Activated naive CD4-positive, alpha-beta T cell treated with anti-CD3 and anti-CD28 coated beads for 36 hours (primary cell): ENCODE measurements at regions of chr5 and their contacts with region 1.

Region 1: GRCh38 chr5:179530069-179530998 is 20.0 kb upstream of the RUFY1 start:
- DNase-seq: peak; percentile 78
- H3K4me3 Mint-ChIP-seq: peak overlapping the region; percentile 48
- H3K27ac Mint-ChIP-seq: no peak overlapping the region
- H3K4me1 Mint-ChIP-seq: peaks cover 15% of the 10 kb centered on the region
- H3K27me3 Mint-ChIP-seq: no peaks in the 10 kb centered on the region

Region 2: GRCh38 chr5:179164331-179165311 is 365.7 kb before region 1 on chr5:
- CTCF ChIA-PET with region 1: no interaction called
- intact Hi-C with region 1: no loop called
- DNase-seq: no peak
- H3K4me3 Mint-ChIP-seq: no peak overlapping the region
- H3K27ac Mint-ChIP-seq: no peak overlapping the region
- H3K4me1 Mint-ChIP-seq: peaks cover 3% of the 10 kb centered on the region
- H3K27me3 Mint-ChIP-seq: peaks cover 2% of the 10 kb centered on the region

Region 3: GRCh38 chr5:179455285-179455684 is 75.0 kb before region 1 on chr5:
- CTCF ChIA-PET with region 1: no interaction called
- intact Hi-C with region 1: no loop called
- DNase-seq: no peak
- H3K4me3 Mint-ChIP-seq: no peak overlapping the region
- H3K27ac Mint-ChIP-seq: no peak overlapping the region
- H3K4me1 Mint-ChIP-seq: no peaks in the 10 kb centered on the region
- H3K27me3 Mint-ChIP-seq: peaks cover 4% of the 10 kb centered on the region

Region 4: GRCh38 chr5:179516221-179516620 is 14.1 kb before region 1 on chr5:
- CTCF ChIA-PET with region 1: no interaction called
- intact Hi-C with region 1: no loop called
- DNase-seq: no peak
- H3K4me3 Mint-ChIP-seq: no peak overlapping the region
- H3K27ac Mint-ChIP-seq: no peak overlapping the region
- H3K4me1 Mint-ChIP-seq: no peaks in the 10 kb centered on the region
- H3K27me3 Mint-ChIP-seq: no peaks in the 10 kb centered on the region

Region 5: DNA sequence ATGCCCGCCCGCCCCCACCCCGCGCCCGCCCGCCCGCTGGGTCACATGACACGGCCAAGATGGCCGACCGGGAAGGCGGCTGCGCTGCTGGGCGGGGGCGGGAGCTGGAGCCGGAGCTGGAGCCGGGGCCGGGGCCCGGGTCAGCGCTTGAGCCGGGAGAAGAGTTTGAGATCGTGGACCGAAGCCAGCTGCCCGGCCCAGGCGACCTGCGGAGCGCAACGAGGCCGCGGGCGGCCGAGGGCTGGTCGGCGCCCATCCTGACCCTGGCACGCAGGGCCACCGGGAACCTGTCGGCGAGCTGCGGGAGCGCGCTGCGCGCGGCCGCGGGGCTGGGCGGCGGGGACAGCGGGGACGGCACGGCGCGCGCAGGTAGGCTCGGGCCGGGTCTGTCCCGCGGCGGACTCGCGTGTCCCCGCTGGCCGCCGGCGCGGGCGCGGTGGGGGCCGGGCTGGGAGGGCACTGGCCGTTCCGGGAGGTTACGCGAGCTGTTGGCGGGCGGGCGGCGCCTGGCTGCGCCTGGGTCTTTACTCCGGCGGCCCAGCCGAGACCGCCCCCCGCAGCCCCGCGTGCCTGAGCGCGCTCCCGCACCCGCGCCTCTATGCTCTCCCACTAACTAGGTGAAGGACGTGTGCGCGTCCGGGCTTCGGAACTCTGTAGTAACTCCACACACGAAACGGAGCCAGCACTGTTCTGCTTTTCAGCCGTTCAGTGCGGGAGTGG is 20.3 kb after region 1 on chr5 and contains the start of gene RUFY1:
- CTCF ChIA-PET with region 1: no interaction called
- intact Hi-C with region 1: loop called (anchors 1 kb)
- DNase-seq: peak; percentile 77
- H3K4me3 Mint-ChIP-seq: peak within 1 kb of the TSS; percentile 97
- H3K27ac Mint-ChIP-seq: peak within 1 kb of the TSS; percentile 98
- H3K4me1 Mint-ChIP-seq: peaks cover 33% of the 10 kb centered on the region
- H3K27me3 Mint-ChIP-seq: no peaks in the 10 kb centered on the region
- total RNA-seq, gene RUFY1: 27.8 to 31.0 TPM

Region 6: GRCh38 chr5:179559284-179560252 is 29.2 kb after region 1 on chr5:
- CTCF ChIA-PET with region 1: no interaction called
- intact Hi-C with region 1: loop called (anchors 2 kb)
- DNase-seq: peak; percentile 98
- H3K4me3 Mint-ChIP-seq: peak overlapping the region; percentile 93
- H3K27ac Mint-ChIP-seq: peak overlapping the region; percentile 91
- H3K4me1 Mint-ChIP-seq: peaks cover 14% of the 10 kb centered on the region
- H3K27me3 Mint-ChIP-seq: no peaks in the 10 kb centered on the region